Head of caudate nucleus (tissue), 42 donors: ENCODE measurements at regions of chr6 and their contacts with region 1.

Region 1: GRCh38 chr6:163180874-163181541 is 233.5 kb upstream of the QKI start:
- DNase-seq: peak; percentile 84 to 98 (median 94)

Region 2: DNA sequence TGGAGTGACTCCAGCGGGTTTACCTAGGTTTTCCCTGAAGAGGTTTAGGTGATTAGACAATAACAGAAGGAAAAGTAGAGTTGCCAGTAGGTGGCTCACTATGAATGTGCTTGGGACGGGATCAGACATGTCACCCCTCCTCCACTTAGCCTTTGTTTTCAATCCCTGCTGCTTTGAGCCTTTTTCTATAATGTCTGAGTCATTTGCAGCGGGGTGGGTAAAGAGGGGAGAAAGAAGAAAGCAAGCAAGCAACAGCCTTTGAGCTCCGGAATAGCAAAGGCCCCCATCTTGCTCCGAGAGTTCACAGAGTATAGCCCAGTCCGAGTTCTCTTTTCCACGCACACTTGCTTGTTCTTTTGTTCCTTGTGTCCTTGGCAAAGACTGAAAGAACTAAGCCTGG is 324.1 kb before region 1 on chr6:
- intact Hi-C with region 1: loop called (anchors 5 kb)
- DNase-seq: peak in 41 of 42 donors; percentile 46 to 96 (median 79)

Region 3: DNA sequence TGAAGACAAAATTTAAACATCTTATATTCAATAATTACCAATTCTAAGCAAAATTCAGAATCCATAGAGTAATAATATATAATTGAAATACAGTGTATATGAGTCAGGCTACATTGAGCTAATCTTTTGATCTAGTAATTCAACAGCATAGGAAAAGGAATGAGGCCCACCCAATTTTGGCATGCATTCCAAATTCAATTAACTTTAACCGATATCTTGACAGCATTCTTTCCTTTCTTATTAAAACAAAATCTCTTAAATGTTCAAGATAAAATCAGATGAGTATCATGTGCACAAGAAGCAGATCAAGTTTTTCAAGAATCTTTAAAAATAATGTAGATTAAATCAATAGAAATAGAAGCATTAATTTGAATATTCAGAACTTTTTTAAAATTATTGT is 100.6 kb after region 1 on chr6:
- intact Hi-C with region 1: no loop called
- DNase-seq: no peak

Region 4: GRCh38 chr6:163324411-163325389 is 143.7 kb after region 1 on chr6:
- intact Hi-C with region 1: loop called (anchors 10 kb)
- DNase-seq: peak; percentile 64 to 91 (median 79)

Region 5: GRCh38 chr6:163579880-163580295 is 398.9 kb after region 1 on chr6:
- intact Hi-C with region 1: loop called (anchors 10 kb)
- DNase-seq: peak in 10 of 42 donors; percentile 15 to 74 (median 45)